GM13977 (cell line): ENCODE measurements at regions of chr5 and their contacts with region 1.

Region 1: GRCh38 chr5:134289509-134290113 is 63.7 kb upstream of the PPP2CA start:
- DNase-seq: peak; percentile 53
- CTCF ChIP-seq: peak; percentile 68

Region 2: GRCh38 chr5:133688391-133688790 is 601.2 kb before region 1 on chr5:
- in situ Hi-C with region 1: no loop called
- DNase-seq: peak; percentile 29
- CTCF ChIP-seq: no peak

Region 3: DNA sequence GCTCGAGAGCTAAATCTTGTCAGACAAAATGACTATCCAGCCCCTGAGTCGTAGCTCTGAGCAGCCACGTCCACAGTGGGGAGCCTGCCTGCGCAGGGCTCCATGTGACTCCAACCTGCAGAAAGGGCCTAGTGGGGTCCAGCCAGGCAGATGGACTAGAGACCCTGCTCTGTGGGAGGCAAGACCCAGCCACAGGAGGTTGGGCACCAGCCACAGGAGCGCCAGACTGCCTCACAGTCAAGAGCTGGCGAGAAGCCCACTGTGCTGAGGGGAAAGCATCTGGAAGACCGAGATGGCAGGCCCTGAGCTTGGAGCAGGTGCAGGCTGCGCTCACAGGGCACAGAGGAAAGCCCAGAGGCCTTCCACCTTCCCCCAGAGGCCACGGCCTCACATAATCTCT is 382.5 kb before region 1 on chr5:
- in situ Hi-C with region 1: no loop called
- DNase-seq: no peak
- CTCF ChIP-seq: no peak

Region 4: DNA sequence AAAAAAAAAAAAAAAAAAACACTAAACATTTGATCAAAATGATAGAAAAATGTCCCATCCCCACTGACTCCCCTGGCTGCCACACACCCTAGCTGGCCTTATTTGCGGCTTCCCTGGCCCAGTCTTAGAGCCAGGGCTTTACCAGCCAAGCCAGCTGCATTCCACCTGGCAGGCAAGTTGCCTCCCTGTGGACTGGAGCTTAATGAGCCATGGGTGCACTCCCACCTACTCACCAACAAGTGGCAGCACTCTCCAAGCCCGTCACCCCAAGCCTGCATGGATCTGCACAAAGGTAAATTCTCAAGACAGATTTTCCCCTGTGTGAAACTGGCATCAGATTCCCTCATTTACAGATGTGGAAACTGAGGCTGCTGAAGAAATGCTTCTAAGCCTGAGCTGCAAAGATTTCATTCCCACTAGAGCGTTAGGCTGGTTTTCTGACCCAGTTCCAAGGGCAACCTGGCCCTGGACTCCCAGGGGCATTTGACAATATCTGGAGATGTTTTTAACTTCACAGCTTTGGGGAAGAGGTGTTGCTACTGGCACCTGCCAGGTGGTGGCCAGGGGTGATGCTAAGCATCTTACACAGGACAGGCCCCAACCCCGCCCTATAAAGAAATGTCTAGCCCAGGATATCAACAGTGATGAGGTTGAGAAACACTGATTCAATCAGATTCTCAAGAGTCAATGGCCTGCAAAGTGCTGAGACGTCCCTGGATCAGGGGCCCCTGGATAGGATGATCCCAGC is 262.9 kb before region 1 on chr5:
- in situ Hi-C with region 1: loop called (anchors 25 kb)
- DNase-seq: peak; percentile 78
- CTCF ChIP-seq: peak; percentile 70

Region 5: DNA sequence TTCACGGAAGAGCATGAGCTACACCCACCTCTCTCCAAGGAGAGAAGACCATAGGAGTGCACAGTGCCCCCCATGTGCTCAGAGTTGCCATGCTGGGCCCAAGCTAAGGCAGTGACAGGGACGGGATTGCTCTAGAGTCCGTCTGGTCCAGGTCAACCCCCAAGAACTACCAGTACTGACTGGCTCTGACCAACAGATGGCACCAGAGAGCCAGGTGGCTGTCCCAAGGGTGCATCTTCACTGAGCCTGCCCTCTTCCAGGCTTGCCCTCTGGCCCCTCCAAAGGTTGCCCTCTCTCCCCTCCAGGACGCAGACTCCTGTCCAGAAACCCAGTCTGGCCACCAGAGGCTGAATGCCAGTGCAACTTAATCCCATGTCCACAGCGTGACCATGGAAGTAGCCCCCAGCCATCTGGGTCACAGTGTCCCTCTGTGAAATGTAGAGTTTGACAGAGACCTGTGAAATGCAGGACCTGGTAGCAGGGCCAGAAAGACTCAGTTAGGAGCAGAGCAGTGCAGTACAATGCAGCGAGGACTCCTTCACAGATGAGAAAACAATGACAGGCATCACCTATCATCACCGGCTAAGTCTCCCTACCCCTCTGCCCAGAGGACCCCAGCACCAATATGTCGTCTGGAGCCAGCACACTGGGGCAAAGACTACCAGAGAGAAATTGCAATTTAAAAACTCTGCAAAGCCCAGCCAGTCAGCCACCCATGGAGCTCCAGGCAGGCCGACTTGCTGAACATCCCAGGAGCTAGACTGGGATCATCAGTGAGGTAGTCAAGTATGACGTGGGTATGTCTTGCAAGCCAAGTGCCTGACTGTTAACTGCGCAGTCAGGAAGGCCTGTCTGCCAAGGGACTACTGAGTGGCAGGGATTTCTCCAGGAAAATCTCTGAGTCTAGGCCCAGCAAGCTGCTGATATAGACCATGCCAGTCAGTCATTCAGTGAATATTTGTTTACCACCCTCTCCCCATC is 105.2 kb before region 1 on chr5:
- in situ Hi-C with region 1: loop called (anchors 5 kb)
- DNase-seq: peak; percentile 79
- CTCF ChIP-seq: peak; percentile 95